GM12878 (cell line): ENCODE measurements at regions of chr21 and their contacts with region 1.

Region 1: GRCh38 chr21:29372063-29372802 is 73.5 kb downstream of the BACH1 start:
- DNase-seq: peak; percentile 59
- ATAC-seq: peak; percentile 95
- H3K4me3 ChIP-seq: no peak overlapping the region
- H3K27ac ChIP-seq: no peak overlapping the region
- H3K4me1 ChIP-seq: no peaks in the 10 kb centered on the region
- H3K27me3 ChIP-seq: no peaks in the 10 kb centered on the region
- CTCF ChIP-seq: peak; percentile 57 to 86 (median 65); a peak in 4 of 6 replicates
- EP300 ChIP-seq: no peak
- POLR2A ChIP-seq: no peak
- RAD21 ChIP-seq: peak; percentile 93

Region 2: GRCh38 chr21:29078869-29079767 is 293.1 kb before region 1 on chr21:
- CTCF ChIA-PET with region 1: interaction called, 12 read pairs
- POLR2A ChIA-PET with region 1: interaction called, 3 read pairs
- RAD21 ChIA-PET with region 1: interaction called, 8 read pairs
- SMC1A ChIA-PET with region 1: interaction called, 5 read pairs
- in situ Hi-C with region 1: no loop called
- intact Hi-C with region 1: no loop called
- DNase-seq: peak; percentile 68
- ATAC-seq: peak; percentile 69
- H3K4me3 ChIP-seq: peak overlapping the region; percentile 41; the same call in 1 of the 2 replicates
- H3K27ac ChIP-seq: peak overlapping the region; percentile 60
- H3K4me1 ChIP-seq: peaks cover 16% of the 10 kb centered on the region
- H3K27me3 ChIP-seq: no peaks in the 10 kb centered on the region
- CTCF ChIP-seq: no peak
- EP300 ChIP-seq: 0 out of 4 replicates have a peak, but pooled peaks of 1 of the 2 experiments have one; percentile 34
- POLR2A ChIP-seq: no peak
- RAD21 ChIP-seq: no peak

Region 3: DNA sequence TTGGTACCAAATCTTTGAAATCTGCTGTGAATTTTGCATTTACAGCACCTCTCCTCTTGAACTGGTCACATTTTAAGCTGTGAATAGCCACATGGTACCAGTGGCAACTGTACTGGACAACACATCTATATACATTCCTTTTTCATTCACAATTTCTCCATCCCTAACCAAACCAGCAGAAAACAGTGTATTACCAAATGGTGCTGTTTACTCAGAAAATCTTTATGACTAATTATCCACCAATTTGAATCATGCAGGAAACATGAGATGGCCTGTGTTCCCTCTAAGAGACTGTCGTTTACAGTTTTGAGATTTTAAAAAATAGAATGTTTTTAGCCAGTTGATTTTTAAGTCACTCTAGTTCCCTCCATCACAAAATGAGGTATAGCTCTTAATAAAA is 281.2 kb before region 1 on chr21:
- CTCF ChIA-PET with region 1: interaction called, 235 read pairs
- POLR2A ChIA-PET with region 1: interaction called, 5 read pairs
- RAD21 ChIA-PET with region 1: interaction called, 85 read pairs
- SMC1A ChIA-PET with region 1: interaction called, 114 read pairs
- in situ Hi-C with region 1: loop called (anchors 5 kb)
- intact Hi-C with region 1: loop called (anchors 1 kb)
- DNase-seq: no peak
- ATAC-seq: no peak
- H3K4me3 ChIP-seq: no peak overlapping the region
- H3K27ac ChIP-seq: no peak overlapping the region
- H3K4me1 ChIP-seq: no peaks in the 10 kb centered on the region
- H3K27me3 ChIP-seq: no peaks in the 10 kb centered on the region
- CTCF ChIP-seq: no peak
- EP300 ChIP-seq: no peak
- POLR2A ChIP-seq: no peak
- RAD21 ChIP-seq: no peak

Region 4: DNA sequence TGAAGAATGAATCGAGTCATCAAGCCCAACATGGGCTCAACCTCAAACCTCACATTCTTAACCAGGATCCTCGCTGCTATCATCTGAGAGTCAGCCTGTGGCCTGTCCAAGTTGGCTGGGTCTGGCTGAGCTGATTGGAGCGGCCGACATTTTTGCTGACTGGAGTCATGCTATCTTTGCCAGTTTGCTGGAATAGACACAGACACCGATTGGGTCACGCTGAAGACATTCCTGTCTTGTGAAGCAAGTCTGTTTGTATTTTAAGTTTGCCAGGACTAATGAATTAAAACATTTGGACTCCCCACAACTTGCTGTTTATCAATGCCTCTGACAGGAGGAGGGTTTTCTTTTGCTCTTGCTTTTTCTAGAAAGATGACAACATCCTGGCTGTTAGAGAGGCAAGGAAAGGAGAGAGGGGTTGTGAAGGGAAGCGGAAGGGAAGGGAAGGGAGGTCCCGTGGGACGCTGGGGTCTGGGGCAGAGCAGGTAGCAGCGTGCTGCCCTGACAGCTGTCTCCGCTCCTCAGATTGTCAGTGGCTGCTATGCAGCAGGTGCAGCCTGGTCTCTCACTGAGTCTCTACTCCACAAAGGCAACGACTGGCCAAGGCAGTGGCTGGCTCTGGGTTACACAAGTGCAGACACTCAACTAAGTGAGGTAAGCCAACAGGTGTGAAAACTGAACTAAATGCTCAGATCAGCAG is 241.8 kb before region 1 on chr21 and contains the start of gene MAP3K7CL:
- CTCF ChIA-PET with region 1: no interaction called
- POLR2A ChIA-PET with region 1: no interaction called
- RAD21 ChIA-PET with region 1: interaction called, 4 read pairs
- SMC1A ChIA-PET with region 1: interaction called, 10 read pairs
- in situ Hi-C with region 1: no loop called
- intact Hi-C with region 1: no loop called
- DNase-seq: no peak
- ATAC-seq: peak; percentile 85
- H3K4me3 ChIP-seq: no peak within 1 kb of the TSS
- H3K27ac ChIP-seq: no peak within 1 kb of the TSS
- H3K4me1 ChIP-seq: peaks cover 11% of the 10 kb centered on the region
- H3K27me3 ChIP-seq: no peaks in the 10 kb centered on the region
- CTCF ChIP-seq: no peak
- EP300 ChIP-seq: 0 out of 4 replicates have a peak, but pooled peaks of 1 of the 2 experiments have one; percentile 28
- POLR2A ChIP-seq: no peak
- RAD21 ChIP-seq: no peak
- polyA plus RNA-seq, gene MAP3K7CL: 13.1 to 19.7 TPM

Region 5: DNA sequence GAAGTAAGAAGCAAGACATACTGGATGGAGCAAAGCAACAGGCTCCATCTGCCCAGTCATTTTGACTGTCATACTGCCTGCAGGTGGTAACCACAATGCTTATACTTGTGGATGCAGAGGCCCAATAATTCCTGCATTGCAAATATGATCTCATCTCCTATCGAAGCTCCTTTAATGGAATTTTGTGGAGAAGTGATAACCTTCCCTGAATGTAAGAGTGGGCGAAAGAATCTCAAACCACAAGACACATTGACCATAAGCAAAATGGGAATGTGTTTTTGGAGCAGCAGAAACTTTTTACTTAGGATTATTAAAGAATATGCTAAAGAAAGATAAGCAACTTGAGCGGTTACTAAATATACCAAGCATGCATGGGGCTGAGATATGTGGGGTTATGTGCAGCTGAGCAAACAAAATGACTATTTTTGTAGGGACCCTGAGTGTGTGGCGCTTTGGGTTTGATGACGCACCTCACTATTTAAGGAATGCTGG is 150.9 kb before region 1 on chr21:
- CTCF ChIA-PET with region 1: interaction called, 11 read pairs
- POLR2A ChIA-PET with region 1: no interaction called
- RAD21 ChIA-PET with region 1: no interaction called
- SMC1A ChIA-PET with region 1: interaction called, 9 read pairs
- in situ Hi-C with region 1: no loop called
- intact Hi-C with region 1: no loop called
- DNase-seq: no peak
- ATAC-seq: no peak
- H3K4me3 ChIP-seq: no peak overlapping the region
- H3K27ac ChIP-seq: no peak overlapping the region
- H3K4me1 ChIP-seq: peaks cover 5% of the 10 kb centered on the region
- H3K27me3 ChIP-seq: no peaks in the 10 kb centered on the region
- CTCF ChIP-seq: no peak
- EP300 ChIP-seq: no peak
- POLR2A ChIP-seq: no peak
- RAD21 ChIP-seq: no peak

Region 6: DNA sequence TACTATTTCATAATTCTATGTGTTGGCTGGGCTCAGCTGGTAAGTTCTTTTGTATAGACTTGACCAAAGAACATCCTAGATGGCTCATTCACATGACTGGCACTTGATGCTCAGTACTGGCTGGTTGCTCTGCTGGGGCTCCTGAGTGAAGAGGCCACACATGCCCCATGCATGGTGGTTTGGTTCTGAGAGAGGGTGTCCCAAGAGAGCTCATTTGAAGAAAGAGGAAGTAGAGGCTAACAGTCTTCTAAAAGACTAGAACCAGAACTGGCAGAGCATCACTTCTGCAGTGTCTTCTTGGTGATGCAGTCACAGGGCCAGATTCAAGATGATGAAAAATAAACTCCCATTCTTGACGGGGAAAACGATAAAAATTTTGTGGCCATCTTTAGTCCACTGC is 78.7 kb before region 1 on chr21:
- CTCF ChIA-PET with region 1: interaction called, 24 read pairs
- POLR2A ChIA-PET with region 1: no interaction called
- RAD21 ChIA-PET with region 1: interaction called, 3 read pairs
- SMC1A ChIA-PET with region 1: interaction called, 10 read pairs
- in situ Hi-C with region 1: no loop called
- intact Hi-C with region 1: no loop called
- DNase-seq: peak; percentile 71
- ATAC-seq: peak; percentile 95
- H3K4me3 ChIP-seq: no peak overlapping the region
- H3K27ac ChIP-seq: no peak overlapping the region
- H3K4me1 ChIP-seq: peaks cover 26% of the 10 kb centered on the region
- H3K27me3 ChIP-seq: no peaks in the 10 kb centered on the region
- CTCF ChIP-seq: no peak
- EP300 ChIP-seq: no peak
- POLR2A ChIP-seq: no peak
- RAD21 ChIP-seq: 0 out of 2 replicates have a peak, but pooled peaks have one; percentile 4

Region 7: GRCh38 chr21:29360799-29361765 is 11.2 kb before region 1 on chr21:
- CTCF ChIA-PET with region 1: interaction called, 46 read pairs
- POLR2A ChIA-PET with region 1: no interaction called
- RAD21 ChIA-PET with region 1: interaction called, 11 read pairs
- SMC1A ChIA-PET with region 1: interaction called, 28 read pairs
- in situ Hi-C with region 1: no loop called
- intact Hi-C with region 1: no loop called
- DNase-seq: no peak
- ATAC-seq: peak; percentile 36; the same call in 1 of the 3 replicates
- H3K4me3 ChIP-seq: no peak overlapping the region
- H3K27ac ChIP-seq: no peak overlapping the region
- H3K4me1 ChIP-seq: no peaks in the 10 kb centered on the region
- H3K27me3 ChIP-seq: no peaks in the 10 kb centered on the region
- CTCF ChIP-seq: peak in 1 of 3 experiments; percentile 5; a peak in 1 of 6 replicates
- EP300 ChIP-seq: no peak
- POLR2A ChIP-seq: no peak
- RAD21 ChIP-seq: 0 out of 2 replicates have a peak, but pooled peaks have one; percentile 8

Region 8: GRCh38 chr21:29711236-29711635 is 339.0 kb after region 1 on chr21:
- CTCF ChIA-PET with region 1: no interaction called
- POLR2A ChIA-PET with region 1: no interaction called
- RAD21 ChIA-PET with region 1: no interaction called
- SMC1A ChIA-PET with region 1: no interaction called
- in situ Hi-C with region 1: no loop called
- intact Hi-C with region 1: no loop called
- DNase-seq: no peak
- ATAC-seq: no peak
- H3K4me3 ChIP-seq: no peak overlapping the region
- H3K27ac ChIP-seq: no peak overlapping the region
- H3K4me1 ChIP-seq: no peaks in the 10 kb centered on the region
- H3K27me3 ChIP-seq: no peaks in the 10 kb centered on the region
- CTCF ChIP-seq: no peak
- EP300 ChIP-seq: no peak
- POLR2A ChIP-seq: no peak
- RAD21 ChIP-seq: no peak